MCF 10A (cell line): ENCODE measurements at regions of chr12 and their contacts with region 1.

Region 1: GRCh38 chr12:53321074-53321814 is at the start of gene AAAS:
- DNase-seq: peak; percentile 94
- H3K4me3 Mint-ChIP-seq: peak within 1 kb of the TSS; percentile 90
- H3K27ac Mint-ChIP-seq: peak within 1 kb of the TSS; percentile 93
- H3K4me1 Mint-ChIP-seq: peaks cover 23% of the 10 kb centered on the region
- H3K27me3 Mint-ChIP-seq: no peaks in the 10 kb centered on the region
- CTCF ChIP-seq: peak; percentile 90
- total RNA-seq, gene AAAS: 52.7 and 60.5 TPM in 2 replicates

Region 2: DNA sequence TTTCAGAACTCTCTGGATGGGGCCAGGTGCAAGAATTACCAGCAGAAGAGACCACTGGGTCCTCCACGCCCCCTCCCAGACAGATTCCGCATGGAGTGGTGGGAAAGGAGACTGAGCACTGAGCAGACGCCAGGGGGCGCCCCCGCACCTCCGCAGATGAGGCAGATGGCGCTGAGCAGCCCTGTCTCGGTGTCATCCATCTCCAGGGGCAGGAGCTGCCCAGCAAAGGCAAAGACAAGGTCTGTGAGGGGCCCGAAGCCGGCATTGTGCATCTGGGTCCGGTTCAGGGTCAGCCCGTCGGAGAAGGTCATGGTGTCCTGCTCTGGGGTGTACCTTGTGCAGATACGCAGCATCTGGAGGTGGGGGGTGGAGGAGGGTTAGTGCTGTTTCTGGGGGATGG is 107.9 kb before region 1 on chr12:
- CTCF ChIA-PET with region 1: interaction called, 34 read pairs
- POLR2A ChIA-PET with region 1: no interaction called
- intact Hi-C with region 1: no loop called
- DNase-seq: peak; percentile 72
- H3K4me3 Mint-ChIP-seq: no peak overlapping the region
- H3K27ac Mint-ChIP-seq: no peak overlapping the region
- H3K4me1 Mint-ChIP-seq: peaks cover 24% of the 10 kb centered on the region
- H3K27me3 Mint-ChIP-seq: no peaks in the 10 kb centered on the region
- CTCF ChIP-seq: peak; percentile 93

Region 3: DNA sequence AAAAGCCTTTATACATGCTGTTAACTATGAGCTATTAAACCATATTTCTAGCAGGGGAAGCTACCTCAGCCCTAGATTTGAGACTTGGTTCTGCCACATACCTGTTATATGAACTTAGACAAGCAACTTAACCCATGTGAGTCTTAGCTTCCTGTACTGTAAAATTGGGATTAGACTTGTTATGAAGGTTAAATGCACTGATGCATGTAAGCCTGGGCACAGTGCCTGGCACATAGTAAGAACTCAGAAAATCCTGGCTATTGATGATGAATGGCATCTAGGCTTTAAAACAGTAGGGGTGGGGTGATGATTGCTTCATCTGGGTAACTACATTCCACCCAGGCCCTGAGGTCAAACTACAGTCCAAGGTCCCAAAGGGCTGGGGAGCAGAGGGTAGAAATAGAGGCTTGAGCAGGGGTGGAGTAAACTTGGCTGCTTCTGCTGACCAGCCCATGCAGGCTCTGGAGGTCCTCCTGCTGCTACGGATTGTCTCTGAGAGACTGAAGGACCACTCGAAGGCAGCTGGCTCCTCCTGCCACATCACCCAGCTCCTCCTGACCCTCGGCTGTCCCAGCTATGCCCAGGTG is 41.9 kb before region 1 on chr12:
- CTCF ChIA-PET with region 1: no interaction called
- POLR2A ChIA-PET with region 1: no interaction called
- intact Hi-C with region 1: no loop called
- DNase-seq: no peak
- H3K4me3 Mint-ChIP-seq: no peak overlapping the region
- H3K27ac Mint-ChIP-seq: no peak overlapping the region
- H3K4me1 Mint-ChIP-seq: no peaks in the 10 kb centered on the region
- H3K27me3 Mint-ChIP-seq: no peaks in the 10 kb centered on the region
- CTCF ChIP-seq: no peak

Region 4: GRCh38 chr12:53295070-53295890 is 26.0 kb before region 1 on chr12 and contains the start of gene PFDN5:
- CTCF ChIA-PET with region 1: interaction called, 32 read pairs
- POLR2A ChIA-PET with region 1: interaction called, 79 read pairs
- intact Hi-C with region 1: loop called (anchors 2 kb)
- DNase-seq: peak; percentile 85
- H3K4me3 Mint-ChIP-seq: peak within 1 kb of the TSS; percentile 95
- H3K27ac Mint-ChIP-seq: peak within 1 kb of the TSS; percentile 97
- H3K4me1 Mint-ChIP-seq: peaks cover 20% of the 10 kb centered on the region
- H3K27me3 Mint-ChIP-seq: no peaks in the 10 kb centered on the region
- CTCF ChIP-seq: no peak
- total RNA-seq, gene PFDN5: 205 and 229 TPM in 2 replicates

Region 5: DNA sequence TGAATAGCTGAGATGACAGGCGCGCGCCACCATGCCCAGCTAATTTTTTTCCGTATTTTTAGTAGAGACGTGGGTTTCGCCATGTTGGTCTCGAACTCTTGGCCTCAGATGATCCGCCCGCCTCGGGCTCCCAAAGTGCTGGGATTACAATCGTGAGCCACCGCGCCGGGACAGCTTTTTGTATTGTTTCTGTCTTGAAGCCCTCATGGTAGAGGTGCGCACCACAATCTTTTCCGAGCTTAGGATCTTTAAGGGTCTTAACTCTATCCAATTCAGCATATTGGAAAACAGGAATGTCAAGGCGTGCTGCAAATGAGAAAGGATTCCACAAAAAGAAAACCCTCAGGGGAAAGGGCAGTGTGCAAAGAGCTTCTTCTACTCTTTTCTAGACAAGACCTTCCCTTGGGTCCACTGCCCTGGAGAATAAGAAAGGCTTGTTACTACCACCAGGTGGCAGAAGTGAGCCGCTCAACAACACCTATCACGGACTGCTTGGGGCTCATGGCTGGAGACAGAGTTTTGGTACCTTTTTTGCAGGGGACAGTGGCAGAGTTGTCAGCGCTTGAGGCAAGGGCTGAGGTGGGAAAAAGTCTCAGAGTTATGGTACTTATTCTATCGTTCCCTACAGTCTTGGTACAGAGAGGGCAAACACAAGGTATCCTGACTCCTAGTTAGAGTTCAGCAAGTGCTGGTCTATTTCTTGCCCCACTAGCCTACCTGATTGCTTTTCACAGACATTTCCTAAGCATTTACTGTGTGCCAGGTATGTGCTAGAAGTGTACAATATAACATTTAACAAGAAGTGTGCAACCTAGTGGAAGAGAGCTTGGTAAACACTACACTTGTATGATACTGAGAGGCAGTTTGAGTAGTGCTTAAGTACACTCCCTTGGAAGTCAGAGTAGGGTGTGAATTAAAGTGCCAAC is 31.4 kb after region 1 on chr12:
- CTCF ChIA-PET with region 1: interaction called, 92 read pairs
- POLR2A ChIA-PET with region 1: interaction called, 12 read pairs
- intact Hi-C with region 1: no loop called
- DNase-seq: peak; percentile 91
- H3K4me3 Mint-ChIP-seq: no peak overlapping the region
- H3K27ac Mint-ChIP-seq: peak overlapping the region; percentile 4
- H3K4me1 Mint-ChIP-seq: peaks cover 15% of the 10 kb centered on the region
- H3K27me3 Mint-ChIP-seq: no peaks in the 10 kb centered on the region
- CTCF ChIP-seq: peak; percentile 76

Region 6: DNA sequence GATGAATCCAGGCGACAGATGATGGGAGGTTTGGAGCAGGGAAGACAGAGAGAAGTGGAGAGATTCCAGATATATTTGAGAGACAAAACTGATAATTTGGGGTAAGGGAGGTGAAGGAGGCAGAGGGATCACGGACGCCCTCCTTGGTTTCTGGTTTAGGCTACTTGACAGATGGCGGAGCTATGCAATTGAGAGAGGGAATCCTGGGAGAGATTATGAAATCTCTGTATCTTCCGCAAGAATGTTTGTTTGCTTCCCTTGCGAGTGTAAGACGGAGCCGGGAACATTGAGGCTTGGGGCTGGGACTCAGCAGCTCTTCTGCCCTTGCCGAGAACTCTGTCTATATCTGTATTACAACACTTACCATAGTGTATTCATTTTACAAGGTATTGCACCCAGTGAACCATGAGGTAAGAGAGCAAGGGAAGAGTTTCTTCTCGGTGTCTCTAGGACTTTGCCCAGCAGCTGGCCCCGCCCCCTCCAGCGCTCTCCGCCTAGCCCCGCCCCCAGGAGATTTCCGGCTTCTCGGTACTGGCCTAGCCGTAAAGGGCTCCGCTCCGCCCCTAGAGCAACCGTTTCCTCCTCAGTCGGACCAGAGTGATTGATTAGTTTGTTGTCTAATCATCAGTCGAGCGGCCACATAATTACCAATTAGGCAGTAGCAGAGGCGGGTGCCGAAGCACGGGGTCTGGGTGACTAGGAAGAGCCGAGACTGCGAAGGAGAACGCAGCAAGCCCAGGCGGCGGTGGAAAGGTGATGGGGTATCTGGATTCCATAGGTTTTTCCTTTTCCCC is 120.0 kb after region 1 on chr12 and contains the start of gene PRR13:
- CTCF ChIA-PET with region 1: interaction called, 4 read pairs
- POLR2A ChIA-PET with region 1: interaction called, 24 read pairs
- intact Hi-C with region 1: no loop called
- DNase-seq: peak; percentile 99
- H3K4me3 Mint-ChIP-seq: peak within 1 kb of the TSS; percentile 95
- H3K27ac Mint-ChIP-seq: peak within 1 kb of the TSS; percentile 94
- H3K4me1 Mint-ChIP-seq: peaks cover 18% of the 10 kb centered on the region
- H3K27me3 Mint-ChIP-seq: no peaks in the 10 kb centered on the region
- CTCF ChIP-seq: no peak
- total RNA-seq, gene PRR13: 147 and 173 TPM in 2 replicates

Region 7: GRCh38 chr12:53500776-53501614 is 179.8 kb after region 1 on chr12 and contains the start of gene TARBP2:
- CTCF ChIA-PET with region 1: interaction called, 3 read pairs
- POLR2A ChIA-PET with region 1: interaction called, 33 read pairs
- intact Hi-C with region 1: no loop called
- DNase-seq: peak; percentile 99
- H3K4me3 Mint-ChIP-seq: peak within 1 kb of the TSS; percentile 80
- H3K27ac Mint-ChIP-seq: peak within 1 kb of the TSS; percentile 93
- H3K4me1 Mint-ChIP-seq: peaks cover 36% of the 10 kb centered on the region
- H3K27me3 Mint-ChIP-seq: no peaks in the 10 kb centered on the region
- CTCF ChIP-seq: no peak
- total RNA-seq, gene TARBP2: 26.4 and 27.8 TPM in 2 replicates